Mucosa of descending colon (tissue), 3 donors: ENCODE measurements at regions of chr10 and their contacts with region 1.

Region 1: DNA sequence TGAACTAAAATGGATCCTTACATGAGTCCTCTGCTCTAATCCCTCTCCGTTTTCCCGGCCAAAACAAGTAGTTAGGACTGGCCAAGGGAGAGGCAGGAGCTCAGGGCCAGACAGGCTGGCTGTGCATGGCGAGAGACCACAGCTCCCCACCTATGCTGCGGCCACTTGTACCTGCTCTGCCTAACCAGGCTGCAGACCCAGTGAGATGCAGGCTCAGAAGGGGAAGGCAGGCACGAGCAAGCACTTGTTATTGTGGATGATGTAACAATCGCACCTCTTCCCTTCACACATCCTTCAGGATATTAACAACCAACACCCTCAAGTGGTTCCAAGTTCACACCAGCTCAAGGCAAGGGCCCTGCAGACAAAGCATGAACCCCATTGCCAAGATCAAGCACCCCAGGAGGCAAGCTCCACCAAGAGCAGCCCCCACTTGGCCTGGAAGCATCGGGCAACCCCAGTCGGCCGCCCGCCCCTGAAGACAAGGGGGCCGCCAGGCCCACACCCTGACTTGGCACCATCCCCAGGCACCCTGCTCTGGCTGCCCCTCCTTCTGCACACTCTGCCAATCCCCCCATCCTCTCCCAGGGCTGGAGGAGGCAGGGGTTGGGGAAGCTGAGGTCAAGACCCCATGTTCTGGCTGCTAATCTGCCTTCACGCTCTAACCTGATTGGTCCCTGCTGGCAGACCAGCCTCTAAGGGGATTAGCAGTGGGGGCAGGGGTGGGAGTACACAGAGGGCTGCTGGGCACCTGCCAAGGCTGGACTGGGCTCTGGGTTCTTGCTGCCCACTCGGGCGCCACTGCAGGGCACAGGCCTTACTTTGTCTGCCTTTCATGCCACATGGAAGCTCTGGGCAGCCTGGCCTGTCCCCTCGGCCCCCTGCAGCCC is 111.3 kb downstream of the SLIT1 start:
- DNase-seq: no peak
- ATAC-seq: no peak
- H3K4me3 ChIP-seq: no peak overlapping the region
- H3K4me1 ChIP-seq: no peaks in the 10 kb centered on the region
- CTCF ChIP-seq: no peak

Region 2: GRCh38 chr10:96789571-96790108 is 284.9 kb before region 1 on chr10:
- intact Hi-C with region 1: no loop called
- DNase-seq: no peak
- ATAC-seq: peak; percentile 38
- H3K4me3 ChIP-seq: no peak overlapping the region
- H3K4me1 ChIP-seq: no peaks in the 10 kb centered on the region
- CTCF ChIP-seq: no peak

Region 3: GRCh38 chr10:97207756-97208346 is 133.3 kb after region 1 on chr10:
- intact Hi-C with region 1: loop called in 1 of 2 experiments (anchors 5 kb)
- DNase-seq: no peak
- ATAC-seq: no peak
- H3K4me3 ChIP-seq: no peak overlapping the region
- H3K4me1 ChIP-seq: no peaks in the 10 kb centered on the region
- CTCF ChIP-seq: no peak

Region 4: DNA sequence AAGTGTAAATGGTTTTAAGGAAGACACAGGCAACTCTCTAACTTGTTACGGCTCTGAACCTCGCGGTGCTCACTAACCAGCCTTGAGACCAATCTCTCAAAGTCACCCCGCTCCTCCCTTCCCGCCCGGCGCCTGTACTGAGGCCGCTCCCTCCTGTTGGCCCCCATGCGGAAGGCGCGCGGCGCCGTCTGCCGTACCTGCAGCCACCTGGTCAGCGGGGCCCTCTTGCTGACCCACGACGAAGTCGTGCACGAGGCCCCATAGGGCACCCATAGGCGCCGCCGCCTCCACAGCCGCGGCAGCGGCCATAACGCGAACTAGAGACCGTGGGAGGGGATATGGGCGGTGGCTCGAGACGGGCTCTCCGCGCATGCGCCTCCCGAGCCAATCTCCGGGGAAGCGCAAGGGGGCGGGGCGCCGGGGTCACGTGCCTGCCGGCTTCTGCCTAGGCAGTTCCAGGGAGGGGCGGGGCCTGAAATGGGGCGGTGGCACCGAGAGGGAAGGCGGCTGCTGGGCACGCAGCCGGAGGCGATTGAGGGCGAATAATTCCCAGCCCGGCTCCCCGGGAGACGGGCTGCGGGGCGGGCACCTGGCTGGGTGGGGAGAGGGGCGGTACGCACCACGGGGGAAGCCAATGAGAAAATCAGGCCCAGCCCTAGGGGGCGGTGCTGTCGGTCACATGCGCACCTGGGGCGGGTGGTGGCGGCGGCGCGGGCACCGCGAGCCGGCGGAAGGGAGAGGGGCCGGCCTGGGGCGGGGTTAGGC is 423.8 kb after region 1 on chr10 and contains the start of gene MMS19:
- intact Hi-C with region 1: no loop called
- DNase-seq: peak; percentile 100
- ATAC-seq: peak; percentile 92
- H3K4me3 ChIP-seq: peak within 1 kb of the TSS; percentile 59
- H3K4me1 ChIP-seq: peaks cover 4% of the 10 kb centered on the region
- CTCF ChIP-seq: peak; percentile 23
- total RNA-seq, gene MMS19: 45.7 to 48.5 (median 47.0) TPM